Esophagus muscularis mucosa (tissue), 4 donors: ENCODE measurements at regions of chr22 and their contacts with region 1.

Region 1: DNA sequence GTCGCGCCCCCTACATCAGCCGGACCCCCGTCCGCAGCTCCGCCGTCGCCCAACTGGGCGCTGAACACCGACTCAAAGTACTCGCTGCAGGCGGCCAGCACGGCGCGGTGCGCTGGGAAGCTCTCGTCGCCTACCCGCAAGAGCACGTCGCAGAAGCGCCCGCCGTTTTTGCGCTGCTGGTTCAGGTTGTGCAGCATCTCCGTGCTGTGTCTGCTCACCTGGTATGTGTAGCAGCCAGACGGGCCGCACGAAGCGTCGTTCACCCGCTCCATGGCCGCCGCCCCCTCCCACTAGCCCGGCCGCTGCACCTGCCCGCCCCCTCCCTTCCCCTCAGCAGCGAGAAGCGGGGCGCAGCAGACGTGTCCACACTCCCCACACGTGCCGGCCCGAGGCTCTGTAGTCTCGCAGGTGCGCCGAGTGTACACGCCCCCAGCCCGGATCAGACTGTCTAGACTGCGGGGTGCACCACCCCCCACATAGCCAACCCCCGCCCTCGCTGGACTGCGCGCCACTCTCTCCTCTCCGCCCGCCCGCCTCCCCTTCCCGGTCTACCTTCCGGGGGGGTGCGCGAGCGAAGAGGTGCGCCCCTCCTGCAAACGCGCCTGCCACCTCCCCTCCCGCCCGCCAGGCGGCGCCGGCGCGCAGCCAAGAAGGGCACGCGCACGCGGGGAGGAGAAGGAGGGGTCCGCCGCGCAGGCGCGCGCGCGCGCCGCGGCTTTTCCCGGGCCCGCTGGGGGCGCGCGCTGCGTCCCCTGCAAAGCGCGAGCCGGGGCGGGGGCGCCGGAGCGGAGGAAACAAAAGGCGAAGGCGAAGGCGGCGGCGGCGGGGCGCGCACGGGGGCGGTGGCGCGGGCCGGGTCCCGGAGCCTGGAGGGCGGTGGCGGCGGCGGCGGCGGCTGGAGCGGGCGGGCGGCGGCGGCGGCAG is 553 bp downstream of the PATZ1 start:
- DNase-seq: no peak
- H3K4me3 ChIP-seq: peak overlapping the region; percentile 57 to 79 (median 70)
- H3K27ac ChIP-seq: peak overlapping the region; percentile 82 to 88 (median 86)
- H3K4me1 ChIP-seq: peaks cover 38 to 70% (median 51%) of the 10 kb centered on the region in 4 donors
- H3K27me3 ChIP-seq: no peaks in the 10 kb centered on the region
- CTCF ChIP-seq: peak; percentile 84 to 89 (median 89)
- EP300 ChIP-seq: no peak
- POLR2A ChIP-seq: no peak

Region 2: DNA sequence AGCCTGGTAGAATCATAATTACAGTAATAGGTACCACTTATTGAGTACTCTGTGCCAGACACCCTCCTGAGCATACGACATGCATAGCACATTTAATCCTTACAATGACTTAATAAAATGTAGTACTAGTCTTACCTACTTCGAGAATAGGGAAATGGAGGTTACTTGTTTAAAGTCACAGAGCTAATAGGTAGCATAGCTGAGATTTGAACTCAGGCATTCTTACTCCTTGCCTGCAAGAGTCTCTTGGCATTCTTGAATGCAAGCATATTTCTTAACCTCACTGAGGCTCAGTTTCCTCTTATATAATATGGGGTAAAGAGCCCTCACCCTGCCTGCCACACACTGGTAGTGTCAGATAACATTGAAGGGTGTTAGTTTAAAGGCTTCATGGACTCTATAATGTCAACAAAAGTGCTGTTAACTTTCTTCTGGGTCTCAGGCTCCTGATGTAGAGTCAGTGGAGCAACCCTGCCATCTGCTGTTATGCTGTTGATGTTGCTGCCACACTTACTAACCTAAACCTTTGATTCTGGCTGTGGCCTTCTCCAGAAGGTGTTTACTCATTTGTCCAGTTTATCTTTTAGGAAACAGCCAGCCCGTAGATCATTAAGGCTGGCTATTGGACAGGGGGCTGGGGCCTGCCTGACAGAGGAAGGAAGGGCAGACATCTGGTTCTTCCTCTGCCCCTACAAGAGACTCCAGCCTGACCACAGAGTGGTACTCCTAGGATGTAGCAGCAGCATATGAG is 114.5 kb before region 1 on chr22:
- intact Hi-C with region 1: no loop called
- DNase-seq: no peak
- H3K4me3 ChIP-seq: no peak overlapping the region
- H3K27ac ChIP-seq: peak overlapping the region; percentile 67 to 81 (median 74)
- H3K4me1 ChIP-seq: peaks cover 40 to 65% (median 55%) of the 10 kb centered on the region in 4 donors
- H3K27me3 ChIP-seq: no peaks in the 10 kb centered on the region
- CTCF ChIP-seq: peak; percentile 78 to 89 (median 80)
- EP300 ChIP-seq: no peak
- POLR2A ChIP-seq: no peak

Region 3: DNA sequence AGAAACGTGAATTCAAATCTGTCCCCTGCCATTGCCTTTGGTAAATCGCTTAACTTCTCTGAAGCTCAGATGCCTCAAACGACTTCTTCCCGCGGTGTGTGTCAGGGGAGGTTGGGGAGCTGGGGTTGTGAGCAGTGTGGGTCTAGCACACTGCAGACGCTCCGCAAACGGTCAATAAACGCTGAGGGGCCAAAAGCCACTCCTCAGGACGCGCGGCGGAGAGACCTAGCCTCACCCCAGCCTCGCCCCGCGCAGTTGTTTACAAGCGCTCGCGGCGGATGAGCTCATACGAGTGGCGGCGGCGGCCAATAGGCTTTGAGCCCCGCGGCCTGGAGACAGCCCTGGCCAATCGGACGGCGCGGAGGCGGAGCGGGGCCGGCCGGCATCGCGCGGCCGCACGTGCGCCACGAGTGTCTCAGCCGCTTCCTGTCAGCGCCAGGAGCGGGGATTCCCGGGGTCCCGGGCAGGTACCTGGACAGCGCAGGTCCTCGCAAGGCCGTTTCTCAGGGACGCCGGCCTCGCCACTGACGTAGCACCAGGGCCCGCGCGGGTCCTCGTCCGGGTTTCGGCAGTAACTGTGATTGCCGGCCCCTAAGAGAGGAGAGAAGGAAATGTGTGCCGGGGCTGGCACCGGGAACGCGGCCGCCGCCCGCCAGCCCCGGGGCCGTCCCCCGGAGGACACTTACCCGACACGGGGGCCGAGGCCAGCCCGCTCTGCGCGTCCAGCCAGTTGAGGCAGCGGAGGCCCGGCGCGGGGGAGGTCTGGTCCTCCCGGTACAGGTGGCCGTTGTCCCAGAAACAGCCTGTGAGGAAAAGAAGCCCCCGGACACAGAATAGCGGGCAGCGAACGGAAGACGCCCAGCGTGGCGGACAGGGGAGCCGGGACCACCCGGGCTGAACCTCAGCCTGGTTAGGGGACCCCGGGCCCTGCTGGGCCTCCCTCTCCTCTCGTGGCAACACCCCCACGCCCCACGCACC is 54.8 kb before region 1 on chr22:
- intact Hi-C with region 1: loop called (anchors 5 kb)
- DNase-seq: peak; percentile 98
- H3K4me3 ChIP-seq: peak overlapping the region; percentile 67 to 87 (median 77)
- H3K27ac ChIP-seq: peak overlapping the region; percentile 93 to 99 (median 98)
- H3K4me1 ChIP-seq: peaks cover 59 to 77% (median 67%) of the 10 kb centered on the region in 4 donors
- H3K27me3 ChIP-seq: no peaks in the 10 kb centered on the region
- CTCF ChIP-seq: no peak
- EP300 ChIP-seq: no peak
- POLR2A ChIP-seq: peak; percentile 67

Region 4: GRCh38 chr22:31399211-31400028 is 53.8 kb after region 1 on chr22 and contains the start of gene DRG1:
- intact Hi-C with region 1: loop called (anchors 2 kb)
- DNase-seq: peak; percentile 98
- H3K4me3 ChIP-seq: peak within 1 kb of the TSS; percentile 69 to 87 (median 76)
- H3K27ac ChIP-seq: peak within 1 kb of the TSS; percentile 84 to 91 (median 85)
- H3K4me1 ChIP-seq: peaks cover 12 to 30% (median 21%) of the 10 kb centered on the region in 4 donors
- H3K27me3 ChIP-seq: no peaks in the 10 kb centered on the region
- CTCF ChIP-seq: peak in 1 of 3 experiments; percentile 26
- EP300 ChIP-seq: no peak
- POLR2A ChIP-seq: peak; percentile 91
- total RNA-seq, gene DRG1: 38.3 to 61.0 (median 53.0) TPM

Region 5: GRCh38 chr22:31477329-31477728 is 131.7 kb after region 1 on chr22:
- intact Hi-C with region 1: no loop called
- DNase-seq: no peak
- H3K4me3 ChIP-seq: no peak overlapping the region
- H3K27ac ChIP-seq: no peak overlapping the region
- H3K4me1 ChIP-seq: peaks cover 0 to 6% (median 2%) of the 10 kb centered on the region in 4 donors
- H3K27me3 ChIP-seq: no peaks in the 10 kb centered on the region
- CTCF ChIP-seq: no peak
- EP300 ChIP-seq: no peak
- POLR2A ChIP-seq: no peak

Region 6: DNA sequence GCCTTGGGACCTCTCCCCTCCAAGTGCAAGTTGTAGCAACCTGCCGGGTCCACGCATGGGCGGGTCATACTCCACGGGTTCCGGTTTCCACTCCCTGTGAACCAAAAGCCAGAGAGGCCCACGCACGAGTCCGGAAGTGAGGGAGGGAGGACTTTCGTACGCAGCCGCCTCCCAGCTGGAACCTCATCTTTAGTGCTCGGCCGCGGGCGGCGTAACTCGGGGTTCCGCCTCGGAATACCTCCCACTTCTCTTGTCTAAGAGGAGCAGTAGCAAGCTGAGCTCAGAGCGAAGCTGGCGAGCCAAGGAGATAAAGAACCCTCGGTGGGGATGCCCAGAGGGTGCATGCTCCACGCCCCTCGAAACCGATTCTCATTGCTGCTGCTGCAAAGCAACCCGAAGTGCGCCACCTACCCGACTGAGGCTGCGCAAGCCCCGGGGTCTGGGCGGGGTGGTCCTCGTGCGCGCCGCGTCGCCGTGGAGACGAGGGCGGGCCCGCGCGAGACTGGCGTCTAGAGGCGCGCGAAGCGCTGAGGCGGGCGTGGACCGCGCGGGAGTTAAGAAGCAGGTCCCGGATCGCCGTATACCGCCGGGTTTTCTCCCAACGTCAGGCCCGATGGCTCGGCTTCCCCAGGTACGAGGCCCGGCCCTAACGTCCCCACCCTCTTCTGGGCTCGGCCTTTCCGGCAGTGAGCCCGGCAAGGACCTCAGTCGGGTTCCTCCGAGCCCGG is 150.6 kb after region 1 on chr22 and contains the start of gene SFI1:
- intact Hi-C with region 1: no loop called
- DNase-seq: peak; percentile 97
- H3K4me3 ChIP-seq: peak within 1 kb of the TSS; percentile 67 to 88 (median 84)
- H3K27ac ChIP-seq: peak within 1 kb of the TSS; percentile 78 to 84 (median 84)
- H3K4me1 ChIP-seq: peaks cover 14 to 27% (median 19%) of the 10 kb centered on the region in 4 donors
- H3K27me3 ChIP-seq: no peaks in the 10 kb centered on the region
- CTCF ChIP-seq: peak; percentile 17 to 30 (median 24)
- EP300 ChIP-seq: no peak
- POLR2A ChIP-seq: no peak
- total RNA-seq, gene SFI1: 9.4 to 21.1 (median 15.4) TPM

Region 7: DNA sequence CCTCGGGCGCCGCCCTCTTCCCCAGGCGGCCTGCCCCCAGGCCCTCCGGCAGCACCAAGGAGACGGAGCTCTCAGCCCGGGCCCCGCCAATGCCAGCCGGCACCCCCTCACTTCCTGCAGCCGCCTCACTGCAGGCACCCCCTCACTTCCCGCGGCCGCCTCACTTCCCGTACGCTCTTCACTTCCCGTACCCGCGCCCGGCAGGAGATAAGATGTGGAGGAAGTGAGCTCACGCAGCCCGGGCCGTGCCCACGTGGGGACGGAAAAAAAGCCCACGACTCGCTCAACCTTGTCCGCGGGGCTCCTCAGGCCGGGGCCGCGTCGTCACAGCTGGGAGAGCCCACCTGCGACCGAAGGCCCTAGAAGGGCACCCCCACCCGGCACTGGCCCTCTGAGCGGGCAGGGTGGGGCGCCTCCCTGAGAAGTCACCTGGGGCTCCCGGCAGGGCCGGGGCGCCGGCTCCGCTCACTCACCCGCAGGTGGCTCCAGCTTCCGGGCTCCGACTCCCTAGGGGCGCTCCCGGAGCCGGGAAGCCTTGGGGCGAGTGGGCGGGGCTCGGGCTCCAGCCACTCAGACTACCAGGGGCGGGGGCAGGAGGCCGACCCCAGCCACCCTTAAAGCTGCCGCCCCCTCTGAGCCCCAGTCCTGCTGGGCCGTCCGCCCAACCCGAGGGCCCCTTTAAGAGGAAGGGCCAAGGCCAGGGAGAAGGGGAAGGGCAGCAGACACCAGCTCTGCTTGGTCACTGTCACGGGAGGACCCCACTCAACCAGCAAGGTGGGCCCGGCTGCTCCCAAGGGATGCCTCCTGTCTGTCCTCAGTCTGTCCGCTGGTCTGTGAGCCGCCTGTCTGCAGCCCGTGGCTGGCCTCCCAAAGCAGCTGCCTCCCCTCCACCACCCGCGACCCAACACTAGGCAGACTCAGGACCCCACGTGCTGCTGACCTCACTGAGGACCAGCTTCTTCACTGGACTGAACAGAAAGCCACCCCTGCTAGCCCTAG is 285.0 kb after region 1 on chr22:
- intact Hi-C with region 1: loop called (anchors 10 kb)
- DNase-seq: peak; percentile 95
- H3K4me3 ChIP-seq: peak overlapping the region; percentile 69 to 85 (median 76)
- H3K27ac ChIP-seq: peak overlapping the region; percentile 77 to 85 (median 82)
- H3K4me1 ChIP-seq: peaks cover 45 to 71% (median 61%) of the 10 kb centered on the region in 4 donors
- H3K27me3 ChIP-seq: no peaks in the 10 kb centered on the region
- CTCF ChIP-seq: no peak
- EP300 ChIP-seq: no peak
- POLR2A ChIP-seq: no peak